ENCODE measurements at regions of chr1 and their contacts with region 1.

Region 1: GRCh38 chr1:82762829-82763532 is 962.2 kb downstream of the ADGRL2 start:
- DNase-seq: no peak
- H3K4me3 ChIP-seq: no peak overlapping the region
- H3K27ac ChIP-seq: no peak overlapping the region
- H3K4me1 ChIP-seq: peaks cover 0 to 7% (median 3%) of the 10 kb centered on the region in 4 experiments; a peak in 4 of 7 replicates
- H3K27me3 ChIP-seq: no peaks in the 10 kb centered on the region
- CTCF ChIP-seq: no peak
- EP300 ChIP-seq: no peak
- POLR2A ChIP-seq: no peak
- RAD21 ChIP-seq: no peak

Region 2: DNA sequence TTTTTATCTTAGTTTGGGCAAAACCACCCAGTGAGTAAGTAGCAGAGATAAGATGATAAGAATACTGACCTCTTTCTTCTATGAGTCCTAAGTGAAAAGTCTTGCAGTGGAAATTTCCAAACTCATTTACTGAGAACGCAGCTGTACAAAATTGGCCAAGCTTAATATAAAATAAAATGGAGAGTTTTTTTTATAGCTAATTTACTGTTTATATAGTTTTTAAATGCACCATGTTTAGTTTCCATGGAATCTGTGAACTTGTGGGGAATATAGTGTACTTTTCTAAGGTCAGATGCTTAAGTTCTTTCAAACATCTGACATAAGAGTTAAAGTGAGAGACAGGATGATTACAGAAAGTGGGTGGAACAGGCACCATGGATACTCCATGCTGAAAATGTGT is 128.7 kb before region 1 on chr1:
- CTCF ChIA-PET with region 1: no interaction called
- POLR2A ChIA-PET with region 1: no interaction called
- DNase-seq: no peak
- H3K4me3 ChIP-seq: no peak overlapping the region
- H3K27ac ChIP-seq: no peak overlapping the region
- H3K4me1 ChIP-seq: no peaks in the 10 kb centered on the region
- H3K27me3 ChIP-seq: no peaks in the 10 kb centered on the region
- CTCF ChIP-seq: no peak
- EP300 ChIP-seq: no peak
- POLR2A ChIP-seq: no peak
- RAD21 ChIP-seq: no peak

Region 3: GRCh38 chr1:82775402-82776000 is 12.5 kb after region 1 on chr1:
- CTCF ChIA-PET with region 1: interaction called, 12 read pairs
- POLR2A ChIA-PET with region 1: no interaction called
- DNase-seq: peak; percentile 63 to 81
- H3K4me3 ChIP-seq: no peak overlapping the region
- H3K27ac ChIP-seq: no peak overlapping the region
- H3K4me1 ChIP-seq: no peaks in the 10 kb centered on the region
- H3K27me3 ChIP-seq: no peaks in the 10 kb centered on the region
- CTCF ChIP-seq: peak; percentile 75 to 92 (median 84)
- EP300 ChIP-seq: 0 out of 3 replicates have a peak, but pooled peaks of 1 of the 2 experiments have one; percentile 16
- POLR2A ChIP-seq: no peak
- RAD21 ChIP-seq: peak; percentile 92 to 94

Region 4: GRCh38 chr1:82867781-82868180 is 104.8 kb after region 1 on chr1:
- CTCF ChIA-PET with region 1: no interaction called
- POLR2A ChIA-PET with region 1: no interaction called
- DNase-seq: no peak
- H3K4me3 ChIP-seq: no peak overlapping the region
- H3K27ac ChIP-seq: no peak overlapping the region
- H3K4me1 ChIP-seq: no peaks in the 10 kb centered on the region
- H3K27me3 ChIP-seq: no peaks in the 10 kb centered on the region
- CTCF ChIP-seq: no peak
- EP300 ChIP-seq: no peak
- POLR2A ChIP-seq: no peak
- RAD21 ChIP-seq: no peak